Endothelial cell of umbilical vein (primary cell): ENCODE measurements at regions of chrX and their contacts with region 1.

Region 1: GRCh38 chrX:9885150-9885549 is 82.0 kb upstream of the CLDN34 start:
- DNase-seq: peak; percentile 85
- H3K4me3 ChIP-seq: no peak overlapping the region
- H3K27ac ChIP-seq: no peak overlapping the region
- H3K4me1 ChIP-seq: peaks cover 41% of the 10 kb centered on the region
- H3K27me3 ChIP-seq: no peaks in the 10 kb centered on the region
- CTCF ChIP-seq: peak; percentile 56 to 76
- POLR2A ChIP-seq: no peak

Region 2: DNA sequence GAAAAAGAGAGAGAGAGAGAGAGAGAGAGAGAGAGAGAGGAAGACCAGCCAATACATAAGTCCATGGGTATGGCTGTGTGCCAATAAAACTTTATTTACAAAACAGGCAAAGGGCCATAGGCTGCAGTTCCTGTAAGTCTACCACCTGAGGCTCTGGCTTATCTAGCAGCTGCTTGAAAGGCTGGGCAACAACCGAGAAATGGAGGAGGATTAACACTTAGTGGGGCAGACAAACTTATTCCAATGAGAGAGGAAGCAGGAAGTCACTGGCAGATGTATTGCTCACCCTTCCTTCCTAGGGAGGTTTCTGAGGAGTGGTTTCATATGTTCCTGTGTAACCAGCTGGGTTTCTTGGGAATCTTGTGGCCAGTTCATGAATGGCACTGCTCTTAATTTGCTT is 114.8 kb before region 1 on chrX:
- CTCF ChIA-PET with region 1: no interaction called
- POLR2A ChIA-PET with region 1: no interaction called
- dilution Hi-C with region 1: no loop called
- intact Hi-C with region 1: loop called (anchors 1 kb)
- DNase-seq: peak; percentile 72
- H3K4me3 ChIP-seq: no peak overlapping the region
- H3K27ac ChIP-seq: peak overlapping the region; percentile 57
- H3K4me1 ChIP-seq: peaks cover 25% of the 10 kb centered on the region
- H3K27me3 ChIP-seq: no peaks in the 10 kb centered on the region
- CTCF ChIP-seq: no peak
- POLR2A ChIP-seq: no peak

Region 3: GRCh38 chrX:9865804-9866471 is 19.2 kb before region 1 on chrX:
- CTCF ChIA-PET with region 1: interaction called, 11 read pairs
- POLR2A ChIA-PET with region 1: no interaction called
- dilution Hi-C with region 1: no loop called
- intact Hi-C with region 1: no loop called
- DNase-seq: peak; percentile 60
- H3K4me3 ChIP-seq: no peak overlapping the region
- H3K27ac ChIP-seq: peak overlapping the region; percentile 69
- H3K4me1 ChIP-seq: peaks cover 23% of the 10 kb centered on the region
- H3K27me3 ChIP-seq: no peaks in the 10 kb centered on the region
- CTCF ChIP-seq: no peak
- POLR2A ChIP-seq: no peak

Region 4: GRCh38 chrX:9911487-9911886 is 26.3 kb after region 1 on chrX:
- CTCF ChIA-PET with region 1: interaction called, 3 read pairs
- POLR2A ChIA-PET with region 1: no interaction called
- dilution Hi-C with region 1: no loop called
- intact Hi-C with region 1: loop called (anchors 1 kb)
- DNase-seq: peak; percentile 58
- H3K4me3 ChIP-seq: no peak overlapping the region
- H3K27ac ChIP-seq: peak overlapping the region; percentile 78
- H3K4me1 ChIP-seq: peaks cover 16% of the 10 kb centered on the region
- H3K27me3 ChIP-seq: no peaks in the 10 kb centered on the region
- CTCF ChIP-seq: no peak
- POLR2A ChIP-seq: no peak

Region 5: GRCh38 chrX:9940421-9940820 is 55.3 kb after region 1 on chrX:
- CTCF ChIA-PET with region 1: no interaction called
- POLR2A ChIA-PET with region 1: no interaction called
- dilution Hi-C with region 1: no loop called
- intact Hi-C with region 1: loop called (anchors 1 kb)
- DNase-seq: peak; percentile 78
- H3K4me3 ChIP-seq: no peak overlapping the region
- H3K27ac ChIP-seq: peak overlapping the region; percentile 70
- H3K4me1 ChIP-seq: peaks cover 13% of the 10 kb centered on the region
- H3K27me3 ChIP-seq: no peaks in the 10 kb centered on the region
- CTCF ChIP-seq: no peak
- POLR2A ChIP-seq: no peak

Region 6: DNA sequence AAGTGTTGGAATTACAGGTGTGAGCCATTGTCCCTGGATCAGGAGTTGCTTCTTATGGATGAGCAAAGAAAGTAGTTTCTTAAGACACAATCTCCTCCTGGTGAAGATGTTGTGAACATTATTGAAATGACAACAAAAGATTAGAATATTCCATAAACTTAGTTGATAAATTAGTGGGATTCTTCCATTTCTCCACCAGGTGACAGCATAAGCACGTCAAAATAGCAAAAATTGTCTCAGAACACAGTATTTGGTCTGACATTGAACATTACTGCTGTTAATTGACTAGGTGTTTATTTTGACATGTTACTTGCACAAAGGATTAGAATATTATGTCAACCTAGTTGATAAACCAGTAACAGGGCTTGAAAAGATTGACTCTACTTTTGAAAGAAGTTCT is 103.6 kb after region 1 on chrX:
- CTCF ChIA-PET with region 1: no interaction called
- POLR2A ChIA-PET with region 1: no interaction called
- dilution Hi-C with region 1: no loop called
- intact Hi-C with region 1: loop called (anchors 1 kb)
- DNase-seq: peak; percentile 35
- H3K4me3 ChIP-seq: no peak overlapping the region
- H3K27ac ChIP-seq: no peak overlapping the region
- H3K4me1 ChIP-seq: no peaks in the 10 kb centered on the region
- H3K27me3 ChIP-seq: no peaks in the 10 kb centered on the region
- CTCF ChIP-seq: peak; percentile 15 to 34
- POLR2A ChIP-seq: no peak